WTC11 (cell line): ENCODE measurements at regions of chr11 and their contacts with region 1.

Region 1: DNA sequence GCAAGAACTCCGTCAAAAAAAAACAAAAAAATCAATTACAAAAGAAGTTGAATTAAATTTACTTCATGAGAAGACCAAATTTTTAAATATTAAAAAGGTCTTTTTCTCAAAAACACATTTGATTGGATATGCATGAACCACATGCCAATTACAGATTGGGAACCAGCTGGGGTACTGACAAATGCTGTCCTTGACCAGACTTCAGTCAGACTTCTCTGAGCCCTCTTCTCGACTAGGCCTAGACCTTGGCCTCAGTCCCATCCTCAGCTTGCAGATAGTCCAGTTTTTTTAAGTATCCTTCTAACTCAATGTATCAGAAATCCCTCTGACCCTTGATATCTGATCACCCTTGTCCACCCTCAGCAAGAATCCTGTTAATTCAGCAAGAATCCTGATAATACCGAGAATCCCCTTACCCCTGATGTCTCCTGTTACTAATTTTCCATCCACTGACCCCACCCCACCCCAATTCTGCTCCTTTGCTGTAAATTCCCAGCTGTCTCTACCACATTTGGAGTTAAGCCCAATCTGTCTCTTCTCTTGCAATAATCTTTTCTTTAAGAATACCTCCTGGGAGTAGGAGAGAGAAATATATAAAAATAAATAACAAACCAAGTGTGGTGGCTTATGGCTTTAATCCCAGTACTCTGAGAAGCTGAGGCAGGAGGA is 30.9 kb downstream of the OR4D9 start:
- DNase-seq: no peak
- ATAC-seq: no peak
- H3K4me3 Mint-ChIP-seq: no peak overlapping the region
- H3K27ac Mint-ChIP-seq: no peak overlapping the region
- H3K4me1 Mint-ChIP-seq: peaks cover 9% of the 10 kb centered on the region
- H3K27me3 Mint-ChIP-seq: no peaks in the 10 kb centered on the region; the same call in 1 of the 2 replicates
- CTCF ChIP-seq: no peak

Region 2: DNA sequence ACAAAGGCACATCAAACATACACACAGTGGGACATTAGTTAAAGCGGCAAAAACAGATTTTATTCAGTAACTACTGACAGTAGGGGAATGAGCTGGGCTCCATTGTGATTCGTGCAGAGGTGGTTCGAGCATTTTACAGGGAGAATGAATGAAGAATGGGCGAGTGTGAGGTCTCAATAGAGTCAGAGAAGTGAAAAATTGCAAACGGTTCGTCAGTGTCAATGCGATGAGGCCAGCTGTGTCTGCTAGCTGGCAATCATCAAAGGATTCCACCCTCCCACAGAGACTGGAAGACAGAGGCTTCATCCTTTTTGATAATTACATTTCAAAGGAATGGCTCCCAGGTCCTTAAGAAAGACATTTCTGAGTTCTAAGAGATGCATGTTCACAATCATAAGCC is 13.6 kb before region 1 on chr11:
- CTCF ChIA-PET with region 1: interaction called, 20 read pairs
- POLR2A ChIA-PET with region 1: interaction called, 3 read pairs
- DNase-seq: no peak
- ATAC-seq: no peak; the same call in 1 of the 2 replicates
- H3K4me3 Mint-ChIP-seq: no peak overlapping the region; the same call in 1 of the 2 replicates
- H3K27ac Mint-ChIP-seq: no peak overlapping the region
- H3K4me1 Mint-ChIP-seq: peaks cover 30% of the 10 kb centered on the region
- H3K27me3 Mint-ChIP-seq: no peaks in the 10 kb centered on the region
- CTCF ChIP-seq: no peak

Region 3: GRCh38 chr11:59560702-59561469 is 18.6 kb after region 1 on chr11:
- CTCF ChIA-PET with region 1: interaction called, 10 read pairs
- POLR2A ChIA-PET with region 1: no interaction called
- DNase-seq: peak; percentile 83
- ATAC-seq: peak; percentile 6
- H3K4me3 Mint-ChIP-seq: peak overlapping the region; percentile 87
- H3K27ac Mint-ChIP-seq: peak overlapping the region; percentile 84
- H3K4me1 Mint-ChIP-seq: peaks cover 11% of the 10 kb centered on the region
- H3K27me3 Mint-ChIP-seq: peaks cover 7% of the 10 kb centered on the region
- CTCF ChIP-seq: no peak